Calu3 (cell line): ENCODE measurements at regions of chr10 and their contacts with region 1.

Region 1: GRCh38 chr10:62050893-62051433 is 149.5 kb downstream of the ARID5B start:
- DNase-seq: peak; percentile 61
- H3K4me3 Mint-ChIP-seq: peak overlapping the region; percentile 14
- H3K27ac Mint-ChIP-seq: peak overlapping the region; percentile 16
- H3K4me1 Mint-ChIP-seq: peaks cover 66% of the 10 kb centered on the region
- H3K27me3 Mint-ChIP-seq: no peaks in the 10 kb centered on the region
- CTCF ChIP-seq: no peak

Region 2: DNA sequence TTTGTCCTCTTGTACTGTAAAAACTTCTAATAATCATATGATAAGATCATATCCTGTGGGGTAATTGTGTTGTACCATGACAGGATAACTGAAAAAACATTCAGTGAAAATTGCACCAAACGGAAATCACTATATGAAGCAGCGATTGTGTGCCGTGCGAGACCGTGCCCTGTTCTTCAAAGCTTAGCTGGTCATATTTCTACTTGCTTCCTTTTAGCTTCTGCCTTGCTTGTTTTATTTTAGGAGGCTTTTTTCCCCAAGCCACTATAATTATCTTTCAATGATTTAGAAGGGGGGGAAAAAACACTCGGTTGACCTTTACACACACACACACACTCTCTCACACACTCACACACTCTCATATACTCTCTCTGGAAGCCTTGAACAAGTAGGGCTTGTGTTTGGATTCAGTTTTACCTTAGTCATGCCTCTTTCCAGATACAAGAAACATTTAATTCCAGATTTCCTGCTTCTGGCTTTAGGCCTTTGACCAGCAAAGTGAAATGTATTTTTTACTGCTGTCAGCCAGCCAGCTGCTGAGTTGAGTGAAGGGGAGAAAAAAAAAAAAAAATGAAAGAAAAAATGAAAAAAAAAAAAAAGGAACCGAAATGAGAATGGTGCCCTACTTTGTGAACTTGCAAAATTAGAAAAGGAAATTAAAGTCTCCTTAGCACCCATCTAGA is 31.9 kb after region 1 on chr10:
- CTCF ChIA-PET with region 1: interaction called, 3 read pairs
- intact Hi-C with region 1: loop called (anchors 1 kb)
- DNase-seq: peak; percentile 21
- H3K4me3 Mint-ChIP-seq: peak overlapping the region; percentile 27
- H3K27ac Mint-ChIP-seq: peak overlapping the region; percentile 89
- H3K4me1 Mint-ChIP-seq: peaks cover 47% of the 10 kb centered on the region
- H3K27me3 Mint-ChIP-seq: no peaks in the 10 kb centered on the region
- CTCF ChIP-seq: no peak